ENCODE measurements at regions of chr13 and their contacts with region 1.

Region 1: GRCh38 chr13:99980201-99980823 is 1.3 kb upstream of the ZIC2 start:
- H3K4me3 ChIP-seq: peak overlapping the region; percentile 90
- H3K27ac ChIP-seq: peak overlapping the region; percentile 100
- H3K4me1 ChIP-seq: peaks cover 9% of the 10 kb centered on the region
- CTCF ChIP-seq: no peak

Region 2: GRCh38 chr13:99969919-99970621 is 10.2 kb before region 1 on chr13:
- CTCF ChIA-PET with region 1: interaction called, 3 read pairs
- POLR2A ChIA-PET with region 1: interaction called, 101 read pairs
- H3K4me3 ChIP-seq: peak overlapping the region; percentile 73
- H3K27ac ChIP-seq: peak overlapping the region; percentile 100
- H3K4me1 ChIP-seq: peaks cover 9% of the 10 kb centered on the region
- CTCF ChIP-seq: no peak

Region 3: GRCh38 chr13:100019780-100020356 is 39.6 kb after region 1 on chr13:
- CTCF ChIA-PET with region 1: no interaction called
- POLR2A ChIA-PET with region 1: no interaction called
- H3K4me3 ChIP-seq: no peak overlapping the region
- H3K27ac ChIP-seq: no peak overlapping the region
- H3K4me1 ChIP-seq: no peaks in the 10 kb centered on the region
- CTCF ChIP-seq: no peak

Region 4: GRCh38 chr13:100088644-100089464 is 108.5 kb after region 1 on chr13 and contains the start of gene PCCA:
- CTCF ChIA-PET with region 1: no interaction called
- POLR2A ChIA-PET with region 1: interaction called, 14 read pairs
- H3K4me3 ChIP-seq: peak within 1 kb of the TSS; percentile 93
- H3K27ac ChIP-seq: peak within 1 kb of the TSS; percentile 56; the same call in 1 of the 2 replicates
- H3K4me1 ChIP-seq: no peaks in the 10 kb centered on the region
- CTCF ChIP-seq: no peak